Left colon (tissue), 2 donors: ENCODE measurements at regions of chr14 and their contacts with region 1.

Region 1: GRCh38 chr14:93655078-93655750 is 133.1 kb downstream of the PRIMA1 start:
- DNase-seq: no peak
- ATAC-seq: no peak

Region 2: GRCh38 chr14:93789228-93790130 is 134.3 kb after region 1 on chr14:
- intact Hi-C with region 1: loop called in 1 of 2 experiments (anchors 10 kb)
- DNase-seq: no peak
- ATAC-seq: no peak

Region 3: GRCh38 chr14:93892923-93893558 is 237.8 kb after region 1 on chr14:
- intact Hi-C with region 1: loop called (anchors 5 to 10 kb)
- DNase-seq: peak; percentile 39 to 79
- ATAC-seq: peak; percentile 60